Activated CD8-positive, alpha-beta memory T cell treated with anti-CD3 and anti-CD28 coated beads, Interleukin-2, amount 10 ng/mL, durations not matched to agents 7 days and 5 days (primary cell): ENCODE measurements at regions of chr6 and their contacts with region 1.

Region 1: GRCh38 chr6:155528982-155529453 is 73.4 kb upstream of the NOX3 start:
- DNase-seq: no peak
- ATAC-seq: peak; percentile 39
- H3K4me3 Mint-ChIP-seq: no peak overlapping the region
- H3K27ac Mint-ChIP-seq: no peak overlapping the region
- H3K4me1 Mint-ChIP-seq: peaks cover 13% of the 10 kb centered on the region
- H3K27me3 Mint-ChIP-seq: no peaks in the 10 kb centered on the region

Region 2: DNA sequence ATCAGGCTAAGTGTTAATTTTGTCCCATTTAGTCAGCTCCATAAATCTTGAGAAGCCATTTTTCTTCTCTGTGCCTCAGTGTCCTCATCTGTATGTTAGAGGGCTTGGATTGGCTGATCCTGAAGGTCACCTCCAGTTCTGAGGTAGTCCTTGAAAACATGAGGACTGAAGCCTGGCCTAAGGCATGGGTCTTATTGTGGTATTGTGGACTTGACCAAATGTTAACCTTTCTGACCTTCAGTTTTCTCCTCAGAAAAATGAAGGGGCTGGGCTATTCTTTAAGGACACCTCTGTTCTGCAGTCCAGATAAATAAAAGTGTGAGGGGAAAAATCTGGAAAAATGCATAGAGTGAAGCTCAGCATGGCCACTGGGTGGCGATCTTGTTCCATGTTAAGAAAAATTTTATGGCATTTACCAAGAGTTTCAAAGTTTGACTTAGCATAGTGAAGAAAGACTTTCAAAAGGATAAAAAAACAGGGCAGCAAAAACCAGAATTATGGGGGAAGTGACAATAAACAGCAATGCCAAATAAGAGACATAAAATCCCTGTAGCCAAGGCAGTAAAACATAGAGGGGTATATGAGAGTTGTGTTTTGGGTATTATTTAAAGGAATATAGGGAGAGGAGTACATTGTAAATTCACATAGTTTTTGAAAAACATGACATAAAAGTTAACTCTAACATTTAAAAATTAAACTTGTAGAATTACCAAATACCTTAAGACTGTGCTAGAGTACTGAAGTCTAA is 201.5 kb before region 1 on chr6:
- CTCF ChIA-PET with region 1: interaction called, 14 read pairs
- DNase-seq: peak; percentile 57
- ATAC-seq: peak; percentile 57
- H3K4me3 Mint-ChIP-seq: no peak overlapping the region
- H3K27ac Mint-ChIP-seq: no peak overlapping the region
- H3K4me1 Mint-ChIP-seq: peaks cover 3% of the 10 kb centered on the region
- H3K27me3 Mint-ChIP-seq: peaks cover 6% of the 10 kb centered on the region